Naive thymus-derived CD4-positive, alpha-beta T cell (primary cell): ENCODE measurements at regions of chr10 and their contacts with region 1.

Region 1: DNA sequence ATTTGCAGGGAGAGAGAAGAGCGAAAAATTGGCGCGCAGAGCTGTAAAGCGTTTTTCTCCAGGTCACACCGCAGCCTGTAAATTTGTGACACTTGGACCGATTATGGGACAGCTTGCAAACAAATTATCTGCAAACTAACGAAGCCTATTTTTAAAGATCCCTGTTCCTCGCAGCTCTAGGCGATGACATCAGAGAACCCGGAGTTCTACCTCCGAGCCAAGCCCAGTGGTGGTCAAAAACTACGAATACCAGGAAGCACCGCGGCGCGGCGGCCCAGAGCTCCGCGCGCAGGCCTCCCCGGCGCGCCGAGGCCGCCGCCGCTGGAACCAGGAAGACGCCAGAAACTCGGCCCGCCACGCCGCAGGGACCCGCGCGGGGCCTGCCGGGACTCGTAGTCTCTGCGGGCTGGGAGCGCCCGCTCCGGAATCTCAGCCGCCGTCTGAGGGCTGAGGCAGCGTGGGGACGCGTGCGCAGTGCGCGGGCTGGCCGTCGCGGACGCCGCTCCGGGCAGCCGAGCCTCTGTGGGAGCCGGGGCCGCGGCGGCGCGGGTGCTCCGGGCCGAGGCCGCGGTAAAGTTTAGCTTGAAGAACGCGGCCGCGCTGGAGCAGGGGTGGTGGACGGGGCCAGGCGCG is at the start of gene PLEKHA1:
- DNase-seq: peak; percentile 91 to 93 (median 92)
- ATAC-seq: peak; percentile 93
- H3K4me3 ChIP-seq: peak within 1 kb of the TSS; percentile 90
- H3K4me3 Mint-ChIP-seq: peak within 1 kb of the TSS; percentile 91 to 99 (median 96)
- H3K27ac ChIP-seq: peak within 1 kb of the TSS; percentile 98
- H3K27ac Mint-ChIP-seq: peak within 1 kb of the TSS; percentile 81 to 98 (median 93)
- H3K4me1 ChIP-seq: peaks cover 6 to 23% of the 10 kb centered on the region in 2 donors
- H3K4me1 Mint-ChIP-seq: peaks cover 21 to 51% (median 37%) of the 10 kb centered on the region in 7 donors
- H3K27me3 ChIP-seq: no peaks in the 10 kb centered on the region
- H3K27me3 Mint-ChIP-seq: peaks cover 0 to 71% (median 5%) of the 10 kb centered on the region in 5 donors
- total RNA-seq, gene PLEKHA1: 5.9 to 90.1 (median 39.2) TPM

Region 2: GRCh38 chr10:120850911-120851865 is 1523.2 kb before region 1 on chr10 and contains the start of gene WDR11:
- CTCF ChIA-PET with region 1: no interaction called
- POLR2A ChIA-PET with region 1: no interaction called
- intact Hi-C with region 1: loop called in 1 of 2 experiments (anchors 10 kb)
- DNase-seq: peak; percentile 36 to 77 (median 51)
- ATAC-seq: peak; percentile 92
- H3K4me3 ChIP-seq: peak within 1 kb of the TSS; percentile 88
- H3K4me3 Mint-ChIP-seq: peak within 1 kb of the TSS; percentile 93 to 100 (median 97)
- H3K27ac ChIP-seq: peak within 1 kb of the TSS; percentile 82
- H3K27ac Mint-ChIP-seq: peak within 1 kb of the TSS; percentile 91 to 98 (median 97)
- H3K4me1 ChIP-seq: peaks cover 19% of the 10 kb centered on the region in 2 donors
- H3K4me1 Mint-ChIP-seq: peaks cover 30 to 56% (median 53%) of the 10 kb centered on the region in 7 donors
- H3K27me3 ChIP-seq: no peaks in the 10 kb centered on the region
- H3K27me3 Mint-ChIP-seq: no peaks in the 10 kb centered on the region
- total RNA-seq, gene WDR11: 20.5 to 78.1 (median 44.6) TPM

Region 3: GRCh38 chr10:121974535-121975294 is 399.6 kb before region 1 on chr10 and contains the start of gene NSMCE4A:
- CTCF ChIA-PET with region 1: no interaction called
- POLR2A ChIA-PET with region 1: no interaction called
- intact Hi-C with region 1: loop called (anchors 10 kb)
- DNase-seq: peak; percentile 47 to 81 (median 62)
- ATAC-seq: peak; percentile 90
- H3K4me3 ChIP-seq: peak within 1 kb of the TSS; percentile 86
- H3K4me3 Mint-ChIP-seq: peak within 1 kb of the TSS; percentile 72 to 86 (median 81)
- H3K27ac ChIP-seq: peak within 1 kb of the TSS; percentile 74
- H3K27ac Mint-ChIP-seq: peak within 1 kb of the TSS in 6 of 9 donors; percentile 36 to 77 (median 60)
- H3K4me1 ChIP-seq: peaks cover 6 to 11% of the 10 kb centered on the region in 2 donors
- H3K4me1 Mint-ChIP-seq: peaks cover 15 to 35% (median 22%) of the 10 kb centered on the region in 7 donors
- H3K27me3 ChIP-seq: no peaks in the 10 kb centered on the region
- H3K27me3 Mint-ChIP-seq: no peaks in the 10 kb centered on the region
- total RNA-seq, gene NSMCE4A: 34.7 to 87.2 (median 69.4) TPM

Region 4: GRCh38 chr10:122307669-122308486 is 66.5 kb before region 1 on chr10:
- CTCF ChIA-PET with region 1: no interaction called
- POLR2A ChIA-PET with region 1: no interaction called
- intact Hi-C with region 1: no loop called
- DNase-seq: peak in 1 of 9 donors; percentile 4
- ATAC-seq: no peak
- H3K4me3 ChIP-seq: no peak overlapping the region
- H3K4me3 Mint-ChIP-seq: no peak overlapping the region
- H3K27ac ChIP-seq: no peak overlapping the region
- H3K27ac Mint-ChIP-seq: no peak overlapping the region
- H3K4me1 ChIP-seq: no peaks in the 10 kb centered on the region
- H3K4me1 Mint-ChIP-seq: no peaks in the 10 kb centered on the region
- H3K27me3 ChIP-seq: no peaks in the 10 kb centered on the region
- H3K27me3 Mint-ChIP-seq: peaks cover 0 to 22% (median 17%) of the 10 kb centered on the region in 5 donors

Region 5: GRCh38 chr10:122352817-122353525 is 21.4 kb before region 1 on chr10:
- CTCF ChIA-PET with region 1: no interaction called
- POLR2A ChIA-PET with region 1: no interaction called
- intact Hi-C with region 1: no loop called
- DNase-seq: no peak
- ATAC-seq: no peak
- H3K4me3 ChIP-seq: no peak overlapping the region
- H3K4me3 Mint-ChIP-seq: no peak overlapping the region
- H3K27ac ChIP-seq: no peak overlapping the region
- H3K27ac Mint-ChIP-seq: no peak overlapping the region
- H3K4me1 ChIP-seq: no peaks in the 10 kb centered on the region
- H3K4me1 Mint-ChIP-seq: peaks cover 0 to 3% (median 0%) of the 10 kb centered on the region in 7 donors
- H3K27me3 ChIP-seq: no peaks in the 10 kb centered on the region
- H3K27me3 Mint-ChIP-seq: peaks cover 0 to 6% (median 0%) of the 10 kb centered on the region in 5 donors

Region 6: GRCh38 chr10:122388287-122388997 is 14.1 kb after region 1 on chr10:
- CTCF ChIA-PET with region 1: interaction called, 4 read pairs
- POLR2A ChIA-PET with region 1: interaction called, 14 read pairs
- intact Hi-C with region 1: no loop called
- DNase-seq: no peak
- ATAC-seq: no peak
- H3K4me3 ChIP-seq: no peak overlapping the region
- H3K4me3 Mint-ChIP-seq: peak overlapping the region in 4 of 10 donors; percentile 36 to 65 (median 43)
- H3K27ac ChIP-seq: no peak overlapping the region
- H3K27ac Mint-ChIP-seq: peak overlapping the region in 4 of 9 donors; percentile 29 to 50 (median 34)
- H3K4me1 ChIP-seq: peaks cover 0 to 8% of the 10 kb centered on the region in 2 donors
- H3K4me1 Mint-ChIP-seq: peaks cover 0 to 92% (median 74%) of the 10 kb centered on the region in 7 donors
- H3K27me3 ChIP-seq: no peaks in the 10 kb centered on the region
- H3K27me3 Mint-ChIP-seq: peaks cover 0 to 26% (median 0%) of the 10 kb centered on the region in 5 donors

Region 7: GRCh38 chr10:122413325-122413724 is 39.0 kb after region 1 on chr10:
- CTCF ChIA-PET with region 1: interaction called, 6 read pairs
- POLR2A ChIA-PET with region 1: interaction called, 31 read pairs
- intact Hi-C with region 1: loop called (anchors 1 to 2 kb)
- DNase-seq: no peak
- ATAC-seq: no peak
- H3K4me3 ChIP-seq: no peak overlapping the region
- H3K4me3 Mint-ChIP-seq: no peak overlapping the region
- H3K27ac ChIP-seq: no peak overlapping the region
- H3K27ac Mint-ChIP-seq: peak overlapping the region in 1 of 9 donors; percentile 91
- H3K4me1 ChIP-seq: peaks cover 34% of the 10 kb centered on the region in 2 donors
- H3K4me1 Mint-ChIP-seq: peaks cover 19 to 77% (median 64%) of the 10 kb centered on the region in 7 donors
- H3K27me3 ChIP-seq: no peaks in the 10 kb centered on the region
- H3K27me3 Mint-ChIP-seq: peaks cover 0 to 9% (median 0%) of the 10 kb centered on the region in 5 donors

Region 8: GRCh38 chr10:122435212-122435827 is 61.0 kb after region 1 on chr10:
- CTCF ChIA-PET with region 1: interaction called, 12 read pairs
- POLR2A ChIA-PET with region 1: interaction called, 13 read pairs
- intact Hi-C with region 1: loop called in 1 of 2 experiments (anchors 1 kb)
- DNase-seq: peak in 7 of 9 donors; percentile 33 to 73 (median 62)
- ATAC-seq: peak; percentile 70
- H3K4me3 ChIP-seq: no peak overlapping the region
- H3K4me3 Mint-ChIP-seq: no peak overlapping the region
- H3K27ac ChIP-seq: no peak overlapping the region
- H3K27ac Mint-ChIP-seq: peak overlapping the region in 5 of 9 donors; percentile 32 to 81 (median 53)
- H3K4me1 ChIP-seq: no peaks in the 10 kb centered on the region
- H3K4me1 Mint-ChIP-seq: peaks cover 0 to 14% (median 8%) of the 10 kb centered on the region in 7 donors
- H3K27me3 ChIP-seq: no peaks in the 10 kb centered on the region
- H3K27me3 Mint-ChIP-seq: no peaks in the 10 kb centered on the region

Region 9: DNA sequence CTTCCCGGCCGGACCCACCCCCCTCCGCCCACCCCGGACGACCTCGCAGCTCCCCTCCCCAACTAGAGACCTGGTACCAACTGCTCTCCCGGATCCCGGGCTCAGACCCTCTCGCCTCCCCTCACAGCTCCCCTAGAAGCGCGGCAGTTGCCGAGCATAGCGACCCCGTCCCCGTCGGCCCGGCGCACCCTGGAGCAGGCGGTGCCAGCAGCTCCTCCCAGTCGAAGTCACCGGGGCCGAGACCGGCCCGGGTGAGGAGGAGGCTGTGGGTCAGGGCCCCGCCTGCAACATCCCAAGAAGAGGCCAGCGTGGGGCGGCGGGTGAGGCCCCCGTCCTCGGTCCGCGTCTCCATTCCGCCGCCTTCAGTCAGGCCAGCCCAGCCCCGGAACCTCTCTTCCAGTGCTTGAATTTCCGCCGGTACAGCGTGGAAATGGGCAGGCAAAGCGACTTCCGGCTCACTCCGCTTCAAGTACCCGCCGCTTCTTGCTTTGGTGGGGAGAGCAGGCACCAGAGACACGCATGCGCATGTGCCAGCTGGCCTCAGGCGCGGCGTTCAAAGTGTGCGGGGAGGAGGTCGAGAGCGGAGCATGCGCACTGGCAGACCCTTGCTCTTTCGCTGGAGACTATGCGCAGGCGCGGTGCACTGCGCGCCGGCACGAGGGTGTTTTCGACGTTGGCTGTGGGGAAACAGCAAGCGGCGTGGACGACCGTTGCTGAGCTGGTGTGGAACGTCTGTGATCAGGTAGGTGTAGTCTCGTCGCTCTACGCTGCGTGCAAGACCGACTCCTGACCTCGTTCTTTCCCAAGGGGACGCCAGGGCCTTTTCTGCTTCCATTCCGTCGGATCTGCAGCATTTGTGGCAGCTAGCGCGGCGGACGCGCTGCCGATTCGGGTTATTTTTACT is 579.7 kb after region 1 on chr10 and contains the start of gene C10orf88:
- CTCF ChIA-PET with region 1: no interaction called
- POLR2A ChIA-PET with region 1: no interaction called
- intact Hi-C with region 1: loop called (anchors 1 kb)
- DNase-seq: peak; percentile 92 to 98 (median 97)
- ATAC-seq: peak; percentile 97
- H3K4me3 ChIP-seq: peak within 1 kb of the TSS; percentile 69
- H3K4me3 Mint-ChIP-seq: peak within 1 kb of the TSS; percentile 85 to 96 (median 90)
- H3K27ac ChIP-seq: peak within 1 kb of the TSS; percentile 72
- H3K27ac Mint-ChIP-seq: peak within 1 kb of the TSS; percentile 77 to 98 (median 90)
- H3K4me1 ChIP-seq: peaks cover 16% of the 10 kb centered on the region in 2 donors
- H3K4me1 Mint-ChIP-seq: peaks cover 26 to 60% (median 39%) of the 10 kb centered on the region in 7 donors
- H3K27me3 ChIP-seq: no peaks in the 10 kb centered on the region
- H3K27me3 Mint-ChIP-seq: peaks cover 0 to 14% (median 0%) of the 10 kb centered on the region in 5 donors
- total RNA-seq, gene C10orf88: 5.2 to 16.8 (median 12.5) TPM